Esophagus muscularis mucosa (tissue), 4 donors: ENCODE measurements at regions of chr12 and their contacts with region 1.

Region 1: DNA sequence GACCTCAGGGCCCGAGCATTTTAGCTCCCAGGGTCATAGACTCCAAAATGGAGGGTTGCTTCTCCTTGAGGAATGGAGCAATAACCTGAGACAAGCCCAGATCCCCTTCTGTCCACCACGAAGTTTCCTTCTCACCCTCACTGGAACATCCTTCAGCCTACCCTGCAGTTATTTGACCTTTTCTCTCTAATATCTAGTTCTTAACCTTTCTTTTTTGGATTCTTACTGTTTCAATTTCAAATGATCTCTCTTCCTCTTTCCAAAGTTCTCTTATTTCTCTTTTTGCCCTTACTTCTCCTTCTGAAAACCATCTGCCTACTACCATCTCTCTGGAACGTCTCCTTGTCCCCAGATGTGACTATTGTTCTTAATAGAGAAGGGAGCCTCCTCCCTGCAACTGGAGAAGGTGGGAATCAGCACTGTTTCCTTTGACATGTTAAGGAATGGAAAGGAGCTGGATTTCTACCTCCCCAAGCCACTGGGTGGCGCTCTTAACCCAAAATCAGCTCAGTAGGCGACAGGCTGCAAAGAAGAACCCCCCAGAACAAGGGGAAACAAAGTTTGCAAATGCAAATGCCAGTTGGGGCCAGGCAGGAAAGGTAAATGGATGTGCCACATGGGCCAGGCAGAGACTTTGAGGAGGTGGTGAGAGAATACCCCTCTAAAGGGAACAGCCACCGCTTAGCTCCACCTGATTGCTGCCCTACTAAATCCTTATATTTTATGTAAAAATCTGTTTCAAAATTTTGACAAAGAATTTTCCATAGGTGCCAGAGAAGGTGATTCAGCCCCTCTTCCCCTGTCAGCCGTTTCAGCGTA is 22.4 kb upstream of the PDE1B start:
- DNase-seq: no peak
- H3K4me3 ChIP-seq: no peak overlapping the region
- H3K27ac ChIP-seq: no peak overlapping the region
- H3K4me1 ChIP-seq: peaks cover 0 to 3% (median 0%) of the 10 kb centered on the region in 4 donors
- H3K27me3 ChIP-seq: no peaks in the 10 kb centered on the region
- CTCF ChIP-seq: peak; percentile 49 to 67 (median 61)
- EP300 ChIP-seq: no peak
- POLR2A ChIP-seq: no peak

Region 2: DNA sequence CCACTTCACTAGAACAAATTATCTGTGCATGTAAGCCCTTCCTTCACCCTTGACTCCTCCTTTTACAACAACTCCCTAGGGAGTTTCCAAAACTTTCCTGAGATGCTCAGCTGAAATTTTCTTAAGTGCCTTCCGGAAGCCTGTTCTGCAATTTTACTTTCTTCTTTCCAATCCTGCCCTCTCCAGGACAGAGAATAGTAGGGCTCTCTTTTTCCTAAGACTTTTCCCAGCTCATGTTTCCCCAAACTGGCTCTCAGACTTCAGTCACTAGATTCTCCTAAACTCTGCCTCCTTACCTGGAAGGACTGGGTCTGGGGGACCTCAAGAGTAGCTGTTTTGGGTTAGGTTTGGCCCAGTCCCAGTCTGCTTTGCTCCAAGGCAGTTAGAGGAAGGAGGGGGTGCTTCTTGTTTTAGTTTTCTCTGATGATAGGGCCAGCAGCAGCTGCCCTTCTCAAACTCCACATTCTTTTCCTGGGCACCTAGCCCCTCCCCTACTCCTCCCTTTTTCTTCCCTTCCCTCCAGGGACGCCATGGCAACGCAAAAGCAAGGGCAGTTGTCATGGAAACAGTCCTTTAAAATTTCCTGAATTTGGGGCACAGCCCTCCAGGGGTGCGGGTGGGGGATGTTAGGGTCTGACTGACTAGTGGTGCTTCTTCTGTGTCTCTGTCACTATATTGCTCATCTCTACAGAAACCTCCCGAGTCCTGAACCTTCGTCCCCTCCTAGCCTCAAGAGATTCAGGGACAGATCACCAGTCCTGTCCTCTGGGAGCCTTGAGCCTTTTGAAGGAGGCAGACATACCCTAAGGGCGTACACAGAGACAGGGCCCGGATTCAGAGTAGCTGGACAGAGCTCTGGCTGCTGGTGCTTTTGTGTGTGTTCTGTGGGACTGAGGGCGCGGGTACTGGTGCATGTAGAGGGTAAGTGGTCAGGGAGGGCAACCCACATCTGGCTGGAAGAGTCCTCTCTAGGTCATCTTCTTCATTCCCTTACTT is 44.5 kb after region 1 on chr12:
- intact Hi-C with region 1: loop called (anchors 2 kb)
- DNase-seq: no peak
- H3K4me3 ChIP-seq: no peak overlapping the region
- H3K27ac ChIP-seq: no peak overlapping the region
- H3K4me1 ChIP-seq: peaks cover 0 to 12% (median 8%) of the 10 kb centered on the region in 4 donors
- H3K27me3 ChIP-seq: no peaks in the 10 kb centered on the region
- CTCF ChIP-seq: peak; percentile 27 to 33 (median 31)
- EP300 ChIP-seq: no peak
- POLR2A ChIP-seq: no peak